Calu3 (cell line): ENCODE measurements at regions of chr5 and their contacts with region 1.

Region 1: GRCh38 chr5:127206320-127207113 is 84.1 kb upstream of the MEGF10 start:
- DNase-seq: peak; percentile 49
- H3K4me3 Mint-ChIP-seq: no peak overlapping the region
- H3K27ac Mint-ChIP-seq: peak overlapping the region; percentile 62
- H3K4me1 Mint-ChIP-seq: peaks cover 44% of the 10 kb centered on the region
- H3K27me3 Mint-ChIP-seq: no peaks in the 10 kb centered on the region
- CTCF ChIP-seq: no peak

Region 2: DNA sequence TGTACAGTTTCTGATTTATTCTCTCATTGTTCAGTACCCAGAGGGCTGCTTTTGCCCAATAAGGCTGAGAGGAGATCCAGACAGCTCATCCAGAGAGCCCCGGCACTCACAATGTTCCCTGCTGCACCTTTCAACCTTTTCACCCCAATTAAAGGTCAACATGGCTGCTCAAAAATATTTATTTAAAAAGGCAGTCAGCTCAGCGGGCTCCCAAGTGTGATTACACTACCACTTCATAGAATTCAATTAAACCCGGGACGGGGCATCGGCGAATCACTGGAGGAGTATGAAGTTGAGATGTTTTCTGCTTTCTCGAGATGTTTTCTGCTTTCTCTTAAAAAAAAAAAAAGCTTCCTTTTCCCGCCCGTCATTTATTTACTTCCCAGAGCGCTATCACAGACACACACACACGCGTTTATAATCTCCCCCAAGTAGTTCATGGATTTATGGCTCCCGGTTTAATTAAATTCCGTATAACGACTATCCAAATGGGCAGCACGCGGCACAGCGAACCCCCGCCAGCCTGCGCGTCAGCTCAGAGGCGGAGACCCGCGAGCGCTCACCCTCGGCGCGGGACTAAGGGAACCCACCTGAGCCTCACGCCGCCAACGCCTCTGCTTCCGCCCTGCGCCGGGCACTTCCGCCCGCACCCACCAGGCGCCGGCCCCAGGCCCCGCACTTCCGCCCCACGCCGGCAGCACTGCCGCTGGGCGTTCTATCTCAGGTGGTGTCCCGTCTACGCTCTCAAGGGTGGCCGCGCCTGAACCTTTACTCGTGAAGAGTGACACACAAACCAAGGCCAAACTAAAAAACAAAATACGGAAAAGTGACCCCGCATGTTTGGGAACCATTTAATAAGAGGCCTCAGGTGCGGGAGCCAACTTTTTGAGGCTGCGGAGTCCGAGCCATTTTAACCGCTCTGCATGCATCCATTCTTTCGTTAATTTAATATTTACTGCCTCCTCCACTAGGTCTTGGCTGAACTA is 133.4 kb before region 1 on chr5 and contains the start of gene C5orf63:
- CTCF ChIA-PET with region 1: no interaction called
- intact Hi-C with region 1: loop called (anchors 5 kb)
- DNase-seq: peak; percentile 67
- H3K4me3 Mint-ChIP-seq: peak within 1 kb of the TSS; percentile 91
- H3K27ac Mint-ChIP-seq: peak within 1 kb of the TSS; percentile 90
- H3K4me1 Mint-ChIP-seq: no peaks in the 10 kb centered on the region
- H3K27me3 Mint-ChIP-seq: no peaks in the 10 kb centered on the region
- CTCF ChIP-seq: no peak
- total RNA-seq, gene C5orf63: 11.0 and 13.2 TPM in 2 replicates

Region 3: DNA sequence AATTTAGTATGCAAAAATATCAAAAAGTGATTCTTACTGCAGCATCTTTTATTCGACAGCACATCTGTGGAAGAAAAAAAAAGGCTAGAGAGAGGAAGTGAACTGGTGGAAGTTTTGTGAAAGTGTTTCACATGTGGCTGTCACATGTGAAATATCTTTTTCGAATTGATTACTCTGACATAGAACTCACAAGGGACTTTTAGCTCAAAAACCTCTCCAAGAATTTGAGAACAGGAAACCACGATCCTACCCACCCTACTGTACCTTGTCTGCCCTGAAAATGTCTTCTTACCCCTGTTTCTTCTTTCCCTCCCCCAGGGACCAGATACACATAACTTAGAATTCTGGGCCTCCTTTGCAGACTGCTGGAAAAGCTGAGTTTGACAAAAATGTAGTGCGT is 204.4 kb after region 1 on chr5:
- CTCF ChIA-PET with region 1: no interaction called
- intact Hi-C with region 1: no loop called
- DNase-seq: no peak
- H3K4me3 Mint-ChIP-seq: no peak overlapping the region
- H3K27ac Mint-ChIP-seq: no peak overlapping the region
- H3K4me1 Mint-ChIP-seq: no peaks in the 10 kb centered on the region
- H3K27me3 Mint-ChIP-seq: no peaks in the 10 kb centered on the region
- CTCF ChIP-seq: no peak